Panc1 (cell line): ENCODE measurements at regions of chr12 and their contacts with region 1.

Region 1: GRCh38 chr12:106149096-106149784 is 10.5 kb upstream of the NUAK1 start:
- DNase-seq: no peak
- ATAC-seq: peak; percentile 85
- H3K4me3 ChIP-seq: no peak overlapping the region
- H3K27ac ChIP-seq: no peak overlapping the region
- H3K4me1 ChIP-seq: peaks cover 19% of the 10 kb centered on the region
- H3K27me3 ChIP-seq: no peaks in the 10 kb centered on the region
- CTCF ChIP-seq: peak; percentile 90

Region 2: DNA sequence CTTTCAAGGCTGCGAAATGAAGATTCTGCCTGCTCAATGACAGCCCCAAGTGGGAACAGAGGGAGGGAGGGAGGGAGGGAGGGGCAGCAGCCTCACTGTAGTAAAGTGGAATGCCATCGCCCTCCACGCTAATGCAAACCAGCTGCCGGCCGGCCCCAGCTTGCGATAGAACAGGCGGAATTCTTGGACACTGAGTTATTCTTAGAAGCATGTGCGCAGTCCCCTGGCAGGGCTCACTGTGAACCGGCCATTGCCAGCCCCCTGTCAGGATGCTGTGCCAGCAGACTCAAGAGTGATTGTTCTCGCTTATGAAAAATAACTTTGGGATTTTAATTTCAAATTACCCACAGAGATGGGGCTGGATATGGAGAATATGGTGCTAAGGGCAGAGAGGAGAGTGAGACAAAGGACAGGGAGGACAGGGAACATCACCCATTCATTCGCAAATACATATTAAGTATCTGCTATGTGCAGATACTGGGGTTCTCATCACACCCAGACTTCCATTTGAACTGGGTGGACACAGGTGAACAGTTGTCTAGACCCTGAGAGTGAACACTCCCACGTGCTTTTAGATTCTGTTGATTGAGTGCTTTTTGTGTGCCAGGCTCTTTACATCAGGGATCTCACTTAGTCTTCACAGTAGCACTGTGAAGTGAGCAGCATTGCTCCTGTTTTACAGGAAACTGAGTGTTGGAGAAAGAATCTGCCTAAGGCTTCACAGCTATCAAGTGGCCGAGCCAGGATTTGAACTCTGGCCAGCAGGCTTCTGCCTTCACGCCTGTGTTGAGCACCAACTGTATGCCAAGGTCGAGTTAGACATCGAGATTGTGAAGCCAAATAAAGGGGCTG is 625.9 kb before region 1 on chr12:
- CTCF ChIA-PET with region 1: no interaction called
- POLR2A ChIA-PET with region 1: interaction called, 19 read pairs
- in situ Hi-C with region 1: no loop called
- intact Hi-C with region 1: no loop called
- DNase-seq: no peak
- ATAC-seq: no peak
- H3K4me3 ChIP-seq: no peak overlapping the region
- H3K27ac ChIP-seq: no peak overlapping the region
- H3K4me1 ChIP-seq: no peaks in the 10 kb centered on the region
- H3K27me3 ChIP-seq: no peaks in the 10 kb centered on the region
- CTCF ChIP-seq: no peak

Region 3: GRCh38 chr12:106179086-106179485 is 29.8 kb after region 1 on chr12:
- CTCF ChIA-PET with region 1: no interaction called
- POLR2A ChIA-PET with region 1: no interaction called
- in situ Hi-C with region 1: no loop called
- intact Hi-C with region 1: no loop called
- DNase-seq: no peak
- ATAC-seq: no peak
- H3K4me3 ChIP-seq: no peak overlapping the region
- H3K27ac ChIP-seq: no peak overlapping the region
- H3K4me1 ChIP-seq: no peaks in the 10 kb centered on the region
- H3K27me3 ChIP-seq: no peaks in the 10 kb centered on the region; the same call in 1 of the 2 replicates
- CTCF ChIP-seq: no peak